CD8-positive, alpha-beta T cell (primary cell): ENCODE measurements at regions of chr10 and their contacts with region 1.

Region 1: GRCh38 chr10:124152916-124153826 is 59.8 kb upstream of the CHST15 start:
- DNase-seq: peak in 7 of 9 experiments; percentile 14 to 60 (median 33)
- ATAC-seq: peak; percentile 77
- H3K4me3 ChIP-seq: peak overlapping the region; percentile 6 to 26
- H3K4me3 Mint-ChIP-seq: no peak overlapping the region
- H3K27ac ChIP-seq: no peak overlapping the region
- H3K27ac Mint-ChIP-seq: no peak overlapping the region
- H3K4me1 ChIP-seq: peaks cover 16% of the 10 kb centered on the region
- H3K4me1 Mint-ChIP-seq: peaks cover 3% of the 10 kb centered on the region
- H3K27me3 ChIP-seq: peaks cover 0 to 3% of the 10 kb centered on the region in 2 experiments
- H3K27me3 Mint-ChIP-seq: peaks cover 9% of the 10 kb centered on the region
- CTCF ChIP-seq: no peak

Region 2: GRCh38 chr10:124010563-124011131 is 142.5 kb before region 1 on chr10:
- CTCF ChIA-PET with region 1: no interaction called
- POLR2A ChIA-PET with region 1: no interaction called
- intact Hi-C with region 1: no loop called
- DNase-seq: no peak
- ATAC-seq: no peak
- H3K4me3 ChIP-seq: no peak overlapping the region
- H3K4me3 Mint-ChIP-seq: no peak overlapping the region
- H3K27ac ChIP-seq: no peak overlapping the region
- H3K27ac Mint-ChIP-seq: no peak overlapping the region
- H3K4me1 ChIP-seq: no peaks in the 10 kb centered on the region
- H3K4me1 Mint-ChIP-seq: no peaks in the 10 kb centered on the region
- H3K27me3 ChIP-seq: no peaks in the 10 kb centered on the region
- H3K27me3 Mint-ChIP-seq: no peaks in the 10 kb centered on the region
- CTCF ChIP-seq: no peak

Region 3: GRCh38 chr10:124354411-124355382 is 201.5 kb after region 1 on chr10:
- CTCF ChIA-PET with region 1: no interaction called
- POLR2A ChIA-PET with region 1: no interaction called
- intact Hi-C with region 1: loop called in 1 of 2 experiments (anchors 10 kb)
- DNase-seq: peak in 5 of 9 experiments; percentile 7 to 36 (median 20)
- ATAC-seq: no peak
- H3K4me3 ChIP-seq: peak overlapping the region; percentile 47 to 50
- H3K4me3 Mint-ChIP-seq: peak overlapping the region; percentile 85
- H3K27ac ChIP-seq: no peak overlapping the region
- H3K27ac Mint-ChIP-seq: peak overlapping the region; percentile 49
- H3K4me1 ChIP-seq: peaks cover 5% of the 10 kb centered on the region
- H3K4me1 Mint-ChIP-seq: peaks cover 9% of the 10 kb centered on the region
- H3K27me3 ChIP-seq: no peaks in the 10 kb centered on the region
- H3K27me3 Mint-ChIP-seq: no peaks in the 10 kb centered on the region
- CTCF ChIP-seq: no peak

Region 4: GRCh38 chr10:124708922-124709520 is 555.9 kb after region 1 on chr10:
- CTCF ChIA-PET with region 1: no interaction called
- POLR2A ChIA-PET with region 1: no interaction called
- intact Hi-C with region 1: no loop called
- DNase-seq: peak in 1 of 9 experiments; percentile 52
- ATAC-seq: peak; percentile 16
- H3K4me3 ChIP-seq: no peak overlapping the region
- H3K4me3 Mint-ChIP-seq: no peak overlapping the region
- H3K27ac ChIP-seq: peak overlapping the region in 1 of 2 experiments; percentile 72
- H3K27ac Mint-ChIP-seq: peak overlapping the region; percentile 83
- H3K4me1 ChIP-seq: peaks cover 47% of the 10 kb centered on the region
- H3K4me1 Mint-ChIP-seq: peaks cover 85% of the 10 kb centered on the region
- H3K27me3 ChIP-seq: no peaks in the 10 kb centered on the region
- H3K27me3 Mint-ChIP-seq: no peaks in the 10 kb centered on the region
- CTCF ChIP-seq: no peak